Mucosa of descending colon (tissue), 3 donors: ENCODE measurements at regions of chr13 and their contacts with region 1.

Region 1: GRCh38 chr13:112873851-112874750 is 94.9 kb upstream of the MCF2L start:
- DNase-seq: peak; percentile 68 to 79 (median 79)
- ATAC-seq: peak; percentile 85
- H3K4me3 ChIP-seq: no peak overlapping the region
- H3K4me1 ChIP-seq: no peaks in the 10 kb centered on the region
- CTCF ChIP-seq: peak; percentile 60

Region 2: DNA sequence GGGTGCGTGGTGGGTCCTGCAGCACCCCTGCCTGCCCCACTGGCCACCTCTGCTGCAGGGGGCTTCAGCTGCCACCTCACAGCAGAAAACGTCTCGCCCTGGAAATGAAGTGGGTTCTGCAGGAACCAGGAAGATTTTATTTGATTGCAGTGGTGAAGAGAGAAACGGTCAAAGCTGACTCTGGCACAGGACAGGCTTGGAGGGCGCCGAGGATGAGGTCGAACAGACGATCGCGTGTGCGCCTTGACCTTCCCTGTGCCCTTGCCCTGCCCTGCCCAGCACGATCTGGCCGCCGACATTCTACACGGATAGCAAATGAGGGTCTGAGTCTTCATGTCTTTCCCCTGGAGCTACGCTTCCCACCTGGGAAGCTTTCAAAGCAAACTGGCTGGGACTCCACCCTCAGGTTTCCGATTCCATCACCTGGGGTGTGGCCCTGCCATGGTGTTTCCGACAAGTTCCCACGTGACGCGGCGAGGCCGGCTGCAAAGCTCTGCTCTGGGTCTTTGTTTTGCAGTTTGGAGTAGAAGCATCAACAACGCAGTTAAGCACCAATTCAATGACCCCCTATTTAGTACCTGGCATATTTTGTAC is 235.8 kb before region 1 on chr13:
- intact Hi-C with region 1: loop called in 1 of 2 experiments (anchors 10 kb)
- DNase-seq: peak in 1 of 3 donors; percentile 13
- ATAC-seq: peak; percentile 45
- H3K4me3 ChIP-seq: no peak overlapping the region
- H3K4me1 ChIP-seq: no peaks in the 10 kb centered on the region
- CTCF ChIP-seq: no peak

Region 3: GRCh38 chr13:112814905-112815585 is 59.1 kb before region 1 on chr13:
- intact Hi-C with region 1: no loop called
- DNase-seq: no peak
- ATAC-seq: no peak
- H3K4me3 ChIP-seq: no peak overlapping the region
- H3K4me1 ChIP-seq: no peaks in the 10 kb centered on the region
- CTCF ChIP-seq: no peak